Ascending aorta (tissue), 2 donors: ENCODE measurements at regions of chr19 and their contacts with region 1.

Region 1: GRCh38 chr19:40598121-40598917 is 2.9 kb upstream of the LTBP4 start:
- DNase-seq: peak in 1 of 2 donors; percentile 94
- H3K4me3 ChIP-seq: peak overlapping the region; percentile 13 to 57
- H3K27ac ChIP-seq: peak overlapping the region in 1 of 2 donors; percentile 88
- H3K4me1 ChIP-seq: peaks cover 22 to 52% of the 10 kb centered on the region in 2 donors
- H3K27me3 ChIP-seq: no peaks in the 10 kb centered on the region
- CTCF ChIP-seq: peak; percentile 97 to 99 (median 97)

Region 2: DNA sequence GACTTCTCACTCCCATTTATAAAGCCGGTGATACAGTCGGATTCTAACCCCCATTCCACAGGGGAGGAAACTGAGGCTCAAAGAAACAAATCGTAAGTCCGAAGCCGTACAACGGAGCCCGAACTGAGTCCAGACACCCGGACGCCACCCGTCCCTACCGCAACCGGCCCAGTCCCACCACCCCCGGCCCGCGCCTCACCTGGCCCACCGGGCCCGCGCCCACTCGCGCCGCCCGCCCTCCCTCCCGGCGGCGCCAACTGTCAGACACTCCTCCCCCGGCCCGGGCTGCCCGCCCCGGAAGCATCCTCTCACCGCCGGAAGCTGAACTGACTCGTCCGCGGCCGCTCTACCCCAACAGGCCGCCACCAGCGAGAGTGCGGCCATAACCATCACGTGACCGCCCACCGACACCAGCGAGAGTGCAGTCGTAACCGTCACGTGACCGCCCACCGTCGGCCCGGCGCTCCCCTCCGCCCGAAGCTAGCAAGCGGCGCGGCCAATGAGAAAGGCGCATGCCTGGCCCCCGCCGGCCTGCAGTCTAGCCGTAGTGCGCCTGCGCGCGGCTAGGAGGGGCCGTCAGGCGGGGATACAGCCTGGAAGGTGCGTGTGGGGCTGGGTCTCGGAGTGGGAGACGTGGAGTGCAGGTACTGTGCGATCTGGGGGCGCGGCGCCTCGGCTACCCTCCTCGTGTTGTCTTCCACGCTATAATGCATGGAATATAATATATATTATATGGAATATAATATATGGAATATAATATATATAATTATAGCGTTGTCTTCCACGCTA is 250.0 kb before region 1 on chr19 and contains the starts of genes C19orf47 and PLD3:
- intact Hi-C with region 1: loop called (anchors 5 kb)
- DNase-seq: peak; percentile 99 to 100
- H3K4me3 ChIP-seq: peak within 1 kb of the TSS; percentile 80 to 94
- H3K27ac ChIP-seq: peak within 1 kb of the TSS; percentile 51 to 85
- H3K4me1 ChIP-seq: peaks cover 4 to 10% of the 10 kb centered on the region in 2 donors
- H3K27me3 ChIP-seq: no peaks in the 10 kb centered on the region
- CTCF ChIP-seq: no peak
- total RNA-seq, gene C19orf47: 10.4 TPM
- total RNA-seq, gene PLD3: 345 TPM

Region 3: GRCh38 chr19:40529093-40529954 is 69.0 kb before region 1 on chr19:
- intact Hi-C with region 1: loop called (anchors 1 kb)
- DNase-seq: peak; percentile 61 to 91
- H3K4me3 ChIP-seq: peak overlapping the region; percentile 58 to 62
- H3K27ac ChIP-seq: no peak overlapping the region
- H3K4me1 ChIP-seq: peaks cover 2 to 5% of the 10 kb centered on the region in 2 donors
- H3K27me3 ChIP-seq: no peaks in the 10 kb centered on the region
- CTCF ChIP-seq: peak; percentile 96 to 99 (median 98)

Region 4: DNA sequence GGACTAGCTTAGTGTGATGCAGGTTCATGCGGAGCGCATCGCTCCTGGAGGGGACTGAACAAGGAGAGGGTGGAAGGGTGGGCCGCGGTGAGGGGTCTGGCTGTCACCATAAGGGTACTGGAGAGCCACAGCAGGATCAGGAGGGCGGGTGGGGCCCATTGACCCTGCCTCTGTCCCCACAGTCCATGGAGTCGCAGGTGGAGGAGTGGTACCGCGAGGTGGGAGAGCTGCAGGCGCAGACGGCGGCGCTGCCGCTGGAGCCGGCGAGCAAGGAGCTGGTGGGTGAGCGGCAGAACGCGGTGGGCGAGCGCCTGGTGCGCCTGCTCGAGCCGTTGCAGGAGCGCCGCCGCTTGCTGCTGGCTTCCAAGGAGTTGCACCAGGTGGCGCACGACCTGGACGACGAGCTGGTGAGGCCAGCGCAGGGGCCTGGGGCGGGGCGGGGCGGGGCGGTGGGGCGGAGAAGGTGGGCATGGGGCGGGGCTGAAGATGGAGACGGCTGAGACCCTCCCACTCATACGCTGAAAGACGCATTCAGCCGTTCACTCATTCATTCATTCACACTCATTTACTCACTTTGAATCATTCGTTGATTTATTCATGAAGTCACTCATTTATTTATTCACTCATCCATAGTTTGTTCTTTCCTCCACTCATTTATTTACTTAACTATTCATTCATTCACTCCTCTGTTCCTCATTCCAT is 49.2 kb before region 1 on chr19:
- intact Hi-C with region 1: loop called (anchors 2 kb)
- DNase-seq: no peak
- H3K4me3 ChIP-seq: no peak overlapping the region
- H3K27ac ChIP-seq: no peak overlapping the region
- H3K4me1 ChIP-seq: no peaks in the 10 kb centered on the region
- H3K27me3 ChIP-seq: no peaks in the 10 kb centered on the region
- CTCF ChIP-seq: peak; percentile 24 to 65 (median 47)